ENCODE measurements at regions of chr11 and their contacts with region 1.

Region 1: GRCh38 chr11:15629690-15630321 is 515.1 kb downstream of the INSC start:
- DNase-seq: no peak
- ATAC-seq: peak; percentile 28; the same call in 1 of the 2 replicates
- H3K4me3 ChIP-seq: no peak overlapping the region
- H3K27ac ChIP-seq: no peak overlapping the region
- H3K4me1 ChIP-seq: peaks cover 7% of the 10 kb centered on the region
- H3K27me3 ChIP-seq: no peaks in the 10 kb centered on the region; the same call in 1 of the 2 replicates
- CTCF ChIP-seq: peak; percentile 36; the same call in 1 of the 2 replicates
- POLR2A ChIP-seq: no peak
- RAD21 ChIP-seq: 0 out of 2 replicates have a peak, but pooled peaks have one; percentile 6

Region 2: GRCh38 chr11:15027011-15027410 is 602.8 kb before region 1 on chr11:
- CTCF ChIA-PET with region 1: no interaction called
- POLR2A ChIA-PET with region 1: no interaction called
- dilution Hi-C with region 1: no loop called
- in situ Hi-C with region 1: no loop called
- intact Hi-C with region 1: no loop called
- DNase-seq: no peak
- ATAC-seq: no peak
- H3K4me3 ChIP-seq: no peak overlapping the region
- H3K27ac ChIP-seq: no peak overlapping the region
- H3K4me1 ChIP-seq: no peaks in the 10 kb centered on the region
- H3K27me3 ChIP-seq: no peaks in the 10 kb centered on the region
- CTCF ChIP-seq: no peak
- POLR2A ChIP-seq: no peak
- RAD21 ChIP-seq: no peak

Region 3: DNA sequence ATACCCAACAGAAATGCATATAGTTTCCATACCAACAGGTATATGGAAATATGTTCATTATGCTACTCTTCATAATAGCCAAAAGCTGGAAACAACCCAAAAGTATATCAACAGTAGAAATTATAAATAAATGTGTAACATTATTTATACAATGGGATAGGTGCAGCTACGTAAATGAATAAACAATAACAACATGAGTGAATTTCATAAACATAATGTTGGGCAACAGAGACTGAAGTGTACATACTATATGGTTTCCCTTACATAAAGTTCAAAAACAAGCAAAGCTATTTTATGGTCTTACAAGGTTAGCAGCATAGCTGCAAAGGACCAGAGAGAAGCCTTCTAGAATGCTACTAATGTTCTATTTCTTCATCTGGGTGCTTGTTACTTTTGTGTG is 210.1 kb before region 1 on chr11:
- CTCF ChIA-PET with region 1: no interaction called
- POLR2A ChIA-PET with region 1: no interaction called
- dilution Hi-C with region 1: no loop called
- in situ Hi-C with region 1: no loop called
- intact Hi-C with region 1: loop called (anchors 10 kb)
- DNase-seq: no peak
- ATAC-seq: no peak
- H3K4me3 ChIP-seq: no peak overlapping the region
- H3K27ac ChIP-seq: no peak overlapping the region
- H3K4me1 ChIP-seq: no peaks in the 10 kb centered on the region
- H3K27me3 ChIP-seq: no peaks in the 10 kb centered on the region
- CTCF ChIP-seq: no peak
- POLR2A ChIP-seq: no peak
- RAD21 ChIP-seq: no peak